Endothelial cell of umbilical vein (primary cell): ENCODE measurements at regions of chr20 and their contacts with region 1.

Region 1: GRCh38 chr20:667391-667964 is 8.1 kb downstream of the SCRT2 start:
- DNase-seq: peak; percentile 46
- H3K4me3 ChIP-seq: no peak overlapping the region
- H3K27ac ChIP-seq: no peak overlapping the region
- H3K4me1 ChIP-seq: no peaks in the 10 kb centered on the region
- H3K27me3 ChIP-seq: peaks cover 38 to 48% of the 10 kb centered on the region in 2 experiments
- CTCF ChIP-seq: peak; percentile 91 to 92
- POLR2A ChIP-seq: no peak

Region 2: GRCh38 chr20:561437-562231 is 105.8 kb before region 1 on chr20:
- CTCF ChIA-PET with region 1: interaction called, 90 read pairs
- POLR2A ChIA-PET with region 1: no interaction called
- dilution Hi-C with region 1: no loop called
- intact Hi-C with region 1: loop called (anchors 1 kb)
- DNase-seq: peak; percentile 79
- H3K4me3 ChIP-seq: no peak overlapping the region
- H3K27ac ChIP-seq: no peak overlapping the region
- H3K4me1 ChIP-seq: no peaks in the 10 kb centered on the region
- H3K27me3 ChIP-seq: peaks cover 0 to 9% of the 10 kb centered on the region in 2 experiments
- CTCF ChIP-seq: peak; percentile 95
- POLR2A ChIP-seq: no peak

Region 3: DNA sequence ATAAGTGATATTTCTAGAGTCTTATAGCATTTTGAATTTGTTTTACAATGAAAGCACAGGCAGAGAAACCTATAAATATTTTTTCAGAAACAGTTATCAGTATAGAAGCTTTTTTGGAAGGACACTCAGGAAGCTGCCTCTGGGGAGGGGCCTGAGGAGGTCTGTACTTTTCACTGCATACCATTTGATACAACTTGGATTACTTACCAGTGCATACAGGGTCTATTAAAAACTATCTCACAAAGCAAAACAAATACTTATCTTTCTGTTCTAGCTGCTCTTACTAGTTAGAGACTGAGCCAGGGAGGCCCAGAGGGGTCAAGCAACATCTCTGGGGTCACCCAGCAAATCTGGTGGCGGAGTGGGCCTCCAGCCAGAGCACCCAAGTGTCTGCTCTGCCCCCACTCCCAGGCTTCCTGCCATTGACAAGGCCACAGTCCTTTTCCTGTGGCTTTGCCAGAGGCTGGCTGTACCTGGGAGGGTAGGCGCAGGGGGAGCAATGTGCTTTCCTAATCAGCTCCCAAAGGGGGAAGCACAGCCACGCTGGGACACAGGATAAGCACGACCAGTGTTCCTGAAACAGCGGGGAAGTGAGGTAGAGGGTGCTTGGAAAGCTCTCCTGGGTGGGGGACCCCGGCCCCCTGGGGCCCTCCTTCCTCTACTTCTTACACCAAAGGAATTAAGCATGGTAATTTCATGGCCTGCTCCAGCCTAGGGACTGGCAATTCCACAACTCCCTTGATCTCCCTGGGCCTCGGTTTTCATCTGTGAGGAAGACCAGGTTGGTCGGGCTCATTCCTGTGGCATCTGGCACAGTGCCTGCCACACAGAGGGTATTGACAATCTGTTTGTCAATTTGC is 65.1 kb before region 1 on chr20:
- CTCF ChIA-PET with region 1: interaction called, 16 read pairs
- POLR2A ChIA-PET with region 1: no interaction called
- dilution Hi-C with region 1: no loop called
- intact Hi-C with region 1: no loop called
- DNase-seq: peak; percentile 27
- H3K4me3 ChIP-seq: no peak overlapping the region
- H3K27ac ChIP-seq: no peak overlapping the region
- H3K4me1 ChIP-seq: no peaks in the 10 kb centered on the region
- H3K27me3 ChIP-seq: peaks cover 0 to 2% of the 10 kb centered on the region in 2 experiments
- CTCF ChIP-seq: no peak
- POLR2A ChIP-seq: no peak

Region 4: DNA sequence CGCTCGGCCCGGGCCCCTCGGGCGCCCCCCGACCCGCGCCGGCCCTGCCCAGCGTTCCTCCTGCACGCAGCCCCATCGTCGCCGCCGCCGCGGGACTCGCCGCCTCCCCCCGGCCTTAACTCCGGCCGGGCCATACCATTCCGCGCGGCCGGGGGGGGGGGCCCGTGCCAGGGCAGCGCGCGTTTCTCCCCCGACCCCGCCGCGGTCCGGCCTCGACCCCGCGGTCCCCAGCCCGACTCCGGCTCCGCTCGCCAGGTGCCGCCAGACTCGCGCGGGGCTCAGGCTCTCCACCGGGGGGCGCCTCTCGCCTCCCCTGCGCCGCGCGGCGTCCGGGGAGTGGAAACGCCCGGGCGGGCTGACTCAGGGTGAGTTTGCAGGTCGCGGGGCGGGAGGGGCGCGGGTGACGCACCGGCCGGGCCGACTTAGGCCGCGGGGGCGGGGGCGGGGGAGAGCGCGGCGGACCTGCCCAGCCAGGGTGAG is 14.3 kb before region 1 on chr20 and contains the start of gene SRXN1:
- CTCF ChIA-PET with region 1: interaction called, 24 read pairs
- POLR2A ChIA-PET with region 1: no interaction called
- dilution Hi-C with region 1: no loop called
- intact Hi-C with region 1: no loop called
- DNase-seq: peak; percentile 87
- H3K4me3 ChIP-seq: peak within 1 kb of the TSS; percentile 71 to 77 (median 72)
- H3K27ac ChIP-seq: peak within 1 kb of the TSS; percentile 65
- H3K4me1 ChIP-seq: peaks cover 15% of the 10 kb centered on the region
- H3K27me3 ChIP-seq: peaks cover 11 to 12% of the 10 kb centered on the region in 2 experiments
- CTCF ChIP-seq: peak; percentile 55 to 65
- POLR2A ChIP-seq: peak; percentile 76
- total RNA-seq, gene SRXN1: 24.9 and 29.7 TPM in 2 replicates

Region 5: DNA sequence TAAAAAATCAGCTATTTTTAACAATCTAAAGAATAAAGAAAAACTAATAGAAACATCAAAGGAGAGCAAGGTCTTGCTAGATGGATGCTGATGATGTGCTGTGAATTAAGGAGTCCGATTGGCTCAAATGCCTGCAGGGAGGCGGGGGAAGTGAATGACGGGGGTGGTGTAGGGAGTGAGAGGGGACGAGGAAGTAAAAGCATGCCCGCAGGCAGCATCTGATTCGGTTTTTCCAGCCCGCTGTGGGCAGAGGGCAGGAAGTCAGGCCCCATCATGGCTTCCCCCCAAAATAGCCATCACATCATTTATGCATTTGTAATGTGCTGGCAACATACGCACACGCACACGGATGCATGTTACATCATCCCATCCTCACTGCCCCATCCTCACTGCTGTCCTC is 324.4 kb after region 1 on chr20:
- CTCF ChIA-PET with region 1: no interaction called
- POLR2A ChIA-PET with region 1: no interaction called
- dilution Hi-C with region 1: no loop called
- intact Hi-C with region 1: no loop called
- DNase-seq: no peak
- H3K4me3 ChIP-seq: no peak overlapping the region
- H3K27ac ChIP-seq: no peak overlapping the region
- H3K4me1 ChIP-seq: no peaks in the 10 kb centered on the region
- H3K27me3 ChIP-seq: peaks cover 0 to 3% of the 10 kb centered on the region in 2 experiments
- CTCF ChIP-seq: no peak
- POLR2A ChIP-seq: no peak